ENCODE measurements at regions of chr3 and their contacts with region 1.

Region 1: DNA sequence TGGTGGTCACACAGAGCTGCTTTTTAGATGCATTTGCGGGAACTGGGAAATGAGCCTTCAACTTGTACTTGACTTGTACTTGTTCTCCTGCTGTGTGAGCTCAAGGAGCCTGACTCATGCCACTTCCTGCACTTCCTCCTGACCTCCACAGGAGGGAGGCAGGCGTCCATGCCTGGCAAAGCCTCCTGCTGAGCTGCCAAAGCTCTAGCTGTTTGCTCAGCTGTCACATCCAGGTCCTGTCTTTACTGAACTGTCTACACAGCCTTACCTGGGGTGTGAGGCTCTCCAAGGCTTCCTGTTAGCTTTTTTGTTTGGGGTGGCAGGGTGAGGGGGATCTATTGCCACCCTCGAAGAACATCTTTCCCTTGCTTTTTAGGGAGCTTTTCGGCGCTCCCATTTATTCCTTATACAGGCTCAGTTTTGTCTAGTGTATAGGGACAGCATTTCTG is 6.4 kb downstream of the THPO start:
- DNase-seq: peak; percentile 71
- H3K4me3 ChIP-seq: no peak overlapping the region
- H3K27ac ChIP-seq: no peak overlapping the region
- H3K4me1 ChIP-seq: peaks cover 24% of the 10 kb centered on the region
- H3K27me3 ChIP-seq: peaks cover 28% of the 10 kb centered on the region
- CTCF ChIP-seq: peak; percentile 95

Region 2: GRCh38 chr3:184305577-184305976 is 66.0 kb before region 1 on chr3:
- intact Hi-C with region 1: no loop called
- DNase-seq: no peak
- H3K4me3 ChIP-seq: no peak overlapping the region
- H3K27ac ChIP-seq: no peak overlapping the region
- H3K4me1 ChIP-seq: peaks cover 8% of the 10 kb centered on the region
- H3K27me3 ChIP-seq: no peaks in the 10 kb centered on the region
- CTCF ChIP-seq: peak; percentile 41

Region 3: GRCh38 chr3:184543843-184544512 is 172.4 kb after region 1 on chr3:
- intact Hi-C with region 1: loop called (anchors 5 kb)
- DNase-seq: peak; percentile 49
- H3K4me3 ChIP-seq: no peak overlapping the region
- H3K27ac ChIP-seq: no peak overlapping the region
- H3K4me1 ChIP-seq: peaks cover 3% of the 10 kb centered on the region
- H3K27me3 ChIP-seq: peaks cover 61% of the 10 kb centered on the region
- CTCF ChIP-seq: peak; percentile 96

Region 4: DNA sequence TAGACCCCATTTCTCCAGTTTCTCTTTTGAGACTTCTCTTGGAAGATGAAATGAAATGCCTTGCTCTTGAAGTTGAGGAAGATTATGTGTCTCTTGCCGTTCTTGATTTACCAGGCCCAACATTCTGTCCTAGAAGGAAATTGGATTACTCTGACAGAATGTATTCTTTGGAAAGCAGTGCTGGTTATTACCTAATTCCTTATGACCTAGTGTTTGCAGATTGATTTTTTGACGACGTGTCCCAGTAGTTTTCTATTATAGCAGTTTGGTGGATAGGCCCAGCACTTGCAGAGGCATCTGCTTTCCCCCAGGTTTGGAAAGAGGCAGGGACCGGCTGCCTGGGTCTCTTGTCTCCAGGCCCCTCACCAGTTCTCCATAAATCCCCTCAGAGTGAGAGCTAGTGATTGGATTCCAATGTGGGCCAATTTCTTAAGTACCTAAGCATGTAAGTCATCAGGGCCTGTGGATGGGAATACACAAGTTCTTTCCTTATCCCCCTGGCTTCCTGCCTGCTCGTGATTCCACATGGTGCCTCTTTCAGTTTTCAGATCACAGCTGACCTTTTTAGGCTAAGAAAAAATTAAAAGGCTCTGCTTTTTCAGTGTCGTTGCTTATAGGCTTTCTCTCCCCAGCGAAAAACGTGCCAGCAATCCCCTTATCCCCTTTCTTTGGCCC is 240.2 kb after region 1 on chr3:
- intact Hi-C with region 1: no loop called
- DNase-seq: no peak
- H3K4me3 ChIP-seq: no peak overlapping the region
- H3K27ac ChIP-seq: no peak overlapping the region
- H3K4me1 ChIP-seq: no peaks in the 10 kb centered on the region
- H3K27me3 ChIP-seq: no peaks in the 10 kb centered on the region
- CTCF ChIP-seq: no peak

Measured in left ventricle myocardium inferior (tissue), 1 donor.